K562 (cell line): ENCODE measurements at regions of chr2 and their contacts with region 1.

Region 1: DNA sequence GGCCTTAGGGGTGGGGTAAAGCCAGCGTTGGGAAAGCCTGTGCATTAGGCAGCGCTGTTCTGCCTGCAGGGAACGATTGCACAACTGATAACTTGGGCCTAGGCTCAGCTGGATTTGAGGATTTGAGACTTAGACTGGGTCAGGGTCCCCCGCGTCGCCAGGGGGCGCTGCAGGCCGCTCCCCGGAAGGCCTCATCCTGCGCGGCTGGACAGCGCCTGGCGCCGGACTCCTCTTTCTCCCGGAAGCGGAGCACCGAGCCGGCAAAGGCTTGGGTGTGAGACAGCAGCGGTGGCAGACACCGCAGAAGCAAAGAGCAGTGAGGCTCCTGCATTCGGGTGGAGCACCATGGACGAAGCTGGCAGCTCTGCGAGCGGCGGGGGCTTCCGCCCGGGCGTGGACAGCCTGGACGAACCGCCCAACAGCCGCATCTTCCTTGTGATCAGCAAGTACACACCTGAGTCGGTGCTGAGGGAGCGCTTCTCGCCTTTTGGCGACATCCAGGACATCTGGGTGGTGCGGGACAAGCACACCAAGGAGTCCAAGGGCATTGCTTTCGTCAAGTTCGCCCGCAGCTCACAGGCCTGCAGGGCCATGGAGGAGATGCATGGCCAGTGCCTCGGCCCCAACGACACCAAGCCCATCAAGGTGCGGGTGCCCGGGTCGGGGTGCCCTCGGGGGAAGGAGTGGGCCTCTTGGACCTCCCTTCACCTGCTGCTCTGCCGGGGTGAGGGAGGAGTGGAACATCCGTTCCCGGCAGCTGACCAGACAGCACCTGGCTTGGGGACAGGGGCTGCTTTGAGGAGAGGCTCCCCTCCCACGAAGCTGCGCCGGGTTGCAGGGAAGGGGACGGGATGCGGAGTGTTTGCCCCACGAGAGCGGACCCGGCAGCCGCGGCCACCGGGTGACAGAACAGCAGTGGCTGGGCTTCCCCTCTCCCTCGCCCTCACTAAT is at the start of gene RBM45:
- DNase-seq: peak; percentile 95 to 96 (median 95)
- ATAC-seq: peak; percentile 97
- H3K4me3 ChIP-seq: peak within 1 kb of the TSS; percentile 66
- H3K27ac ChIP-seq: peak within 1 kb of the TSS; percentile 54; the same call in 2 of the 3 replicates
- H3K4me1 ChIP-seq: peaks cover 10 to 16% of the 10 kb centered on the region in 2 experiments; a peak in 3 of 5 replicates
- H3K27me3 ChIP-seq: no peaks in the 10 kb centered on the region; a peak in 1 of 5 replicates
- CTCF ChIP-seq: peak; percentile 97 to 99 (median 98)
- EP300 ChIP-seq: peak; percentile 61
- POLR2A ChIP-seq: peak; percentile 93
- RAD21 ChIP-seq: peak; percentile 79 to 86
- polyA plus RNA-seq, gene RBM45: 6.7 to 9.9 TPM

Region 2: GRCh38 chr2:178208817-178209216 is 96.3 kb after region 1 on chr2:
- CTCF ChIA-PET with region 1: interaction called, 3 read pairs
- POLR2A ChIA-PET with region 1: no interaction called
- in situ Hi-C with region 1: no loop called
- intact Hi-C with region 1: loop called (anchors 5 kb)
- DNase-seq: peak in 1 of 4 experiments; percentile 26
- ATAC-seq: no peak
- H3K4me3 ChIP-seq: no peak overlapping the region
- H3K27ac ChIP-seq: no peak overlapping the region
- H3K4me1 ChIP-seq: peaks cover 3 to 12% of the 10 kb centered on the region in 2 experiments; a peak in 3 of 5 replicates
- H3K27me3 ChIP-seq: no peaks in the 10 kb centered on the region; a peak in 1 of 5 replicates
- CTCF ChIP-seq: peak in 2 of 3 experiments; percentile 43 to 59; a peak in 4 of 6 replicates
- EP300 ChIP-seq: no peak
- POLR2A ChIP-seq: no peak
- RAD21 ChIP-seq: peak in 1 of 2 experiments; percentile 60; a peak in 3 of 4 replicates

Region 3: GRCh38 chr2:178280244-178280852 is 167.9 kb after region 1 on chr2:
- CTCF ChIA-PET with region 1: interaction called, 5 read pairs
- POLR2A ChIA-PET with region 1: interaction called, 3 read pairs
- in situ Hi-C with region 1: no loop called
- intact Hi-C with region 1: loop called (anchors 2 kb)
- DNase-seq: peak; percentile 62 to 73 (median 70)
- ATAC-seq: peak; percentile 55
- H3K4me3 ChIP-seq: no peak overlapping the region
- H3K27ac ChIP-seq: no peak overlapping the region
- H3K4me1 ChIP-seq: peaks cover 9 to 48% of the 10 kb centered on the region in 2 experiments
- H3K27me3 ChIP-seq: no peaks in the 10 kb centered on the region
- CTCF ChIP-seq: peak; percentile 55 to 74 (median 64); a peak in 5 of 6 replicates
- EP300 ChIP-seq: no peak
- POLR2A ChIP-seq: no peak
- RAD21 ChIP-seq: peak; percentile 26 to 74; a peak in 2 of 4 replicates

Region 4: DNA sequence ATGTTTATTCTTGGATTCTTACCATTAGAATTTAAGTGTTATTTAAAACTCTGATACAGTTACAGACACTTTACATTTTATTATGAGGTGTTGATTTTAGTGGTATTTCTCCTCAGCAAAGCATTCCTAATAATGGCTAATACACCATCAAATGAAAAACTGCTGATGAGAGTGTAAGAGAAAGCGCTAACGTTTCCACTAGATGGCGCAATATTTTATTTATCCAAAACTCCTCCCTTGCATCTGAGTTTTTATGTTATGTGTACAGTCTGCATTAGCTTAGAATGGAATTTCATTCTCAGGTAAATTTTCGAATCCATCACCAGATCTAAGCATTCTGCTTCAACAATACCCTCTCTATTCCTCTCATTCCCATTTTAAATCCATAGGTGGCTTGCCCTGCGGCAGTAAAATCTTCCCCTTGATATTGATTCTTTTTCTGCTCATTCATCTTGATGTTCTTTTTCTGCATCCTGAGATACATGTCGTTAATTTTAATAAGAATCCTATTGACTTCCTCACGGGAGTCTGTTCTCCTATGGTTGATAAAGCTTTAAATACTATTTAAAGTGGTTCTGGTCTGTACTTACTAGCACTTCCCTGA is 284.6 kb after region 1 on chr2:
- CTCF ChIA-PET with region 1: interaction called, 5 read pairs
- POLR2A ChIA-PET with region 1: no interaction called
- in situ Hi-C with region 1: no loop called
- intact Hi-C with region 1: loop called (anchors 5 kb)
- DNase-seq: peak in 3 of 4 experiments; percentile 27 to 63 (median 46)
- ATAC-seq: peak; percentile 83
- H3K4me3 ChIP-seq: no peak overlapping the region
- H3K27ac ChIP-seq: no peak overlapping the region
- H3K4me1 ChIP-seq: peaks cover 0 to 9% of the 10 kb centered on the region in 2 experiments; a peak in 4 of 5 replicates
- H3K27me3 ChIP-seq: no peaks in the 10 kb centered on the region
- CTCF ChIP-seq: peak; percentile 60 to 84 (median 67); a peak in 5 of 6 replicates
- EP300 ChIP-seq: no peak
- POLR2A ChIP-seq: no peak
- RAD21 ChIP-seq: peak; percentile 59 to 76

Region 5: GRCh38 chr2:178914259-178914849 is 801.9 kb after region 1 on chr2:
- CTCF ChIA-PET with region 1: no interaction called
- POLR2A ChIA-PET with region 1: no interaction called
- in situ Hi-C with region 1: loop called (anchors 10 kb)
- intact Hi-C with region 1: loop called (anchors 5 kb)
- DNase-seq: peak; percentile 65 to 83 (median 72)
- ATAC-seq: peak; percentile 99
- H3K4me3 ChIP-seq: no peak overlapping the region
- H3K27ac ChIP-seq: no peak overlapping the region
- H3K4me1 ChIP-seq: no peaks in the 10 kb centered on the region
- H3K27me3 ChIP-seq: no peaks in the 10 kb centered on the region
- CTCF ChIP-seq: peak; percentile 85 to 89 (median 87)
- EP300 ChIP-seq: no peak
- POLR2A ChIP-seq: no peak
- RAD21 ChIP-seq: peak; percentile 77 to 85